ENCODE measurements at regions of chr20 and their contacts with region 1.

Region 1: GRCh38 chr20:35619196-35620095 is 3.8 kb downstream of the SPAG4 start:
- H3K4me3 ChIP-seq: peak overlapping the region; percentile 51
- H3K27ac ChIP-seq: no peak overlapping the region
- H3K4me1 ChIP-seq: no peaks in the 10 kb centered on the region
- CTCF ChIP-seq: peak; percentile 93

Region 2: DNA sequence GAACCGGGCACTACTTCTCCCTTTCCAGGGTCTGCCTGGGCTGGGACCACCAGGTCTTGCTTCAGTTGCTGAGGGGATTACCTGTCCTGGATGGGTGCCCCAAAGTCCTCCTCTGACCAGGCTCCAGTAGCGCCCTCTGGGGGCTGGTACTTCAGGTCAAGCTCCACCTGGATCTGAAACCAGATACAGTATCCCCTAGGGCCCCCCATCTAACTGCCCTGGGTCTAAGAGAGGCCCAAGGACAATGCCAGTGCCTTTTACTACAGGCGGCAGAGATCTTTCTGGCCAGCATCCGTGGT is 15.0 kb before region 1 on chr20:
- CTCF ChIA-PET with region 1: interaction called, 6 read pairs
- POLR2A ChIA-PET with region 1: interaction called, 10 read pairs
- H3K4me3 ChIP-seq: no peak overlapping the region
- H3K27ac ChIP-seq: no peak overlapping the region
- H3K4me1 ChIP-seq: no peaks in the 10 kb centered on the region
- CTCF ChIP-seq: no peak

Region 3: GRCh38 chr20:35629427-35630145 is 10.1 kb after region 1 on chr20:
- CTCF ChIA-PET with region 1: interaction called, 10 read pairs
- POLR2A ChIA-PET with region 1: interaction called, 4 read pairs
- H3K4me3 ChIP-seq: no peak overlapping the region
- H3K27ac ChIP-seq: no peak overlapping the region
- H3K4me1 ChIP-seq: no peaks in the 10 kb centered on the region
- CTCF ChIP-seq: no peak

Region 4: GRCh38 chr20:35636095-35636494 is 16.6 kb after region 1 on chr20:
- CTCF ChIA-PET with region 1: interaction called, 16 read pairs
- POLR2A ChIA-PET with region 1: interaction called, 5 read pairs
- H3K4me3 ChIP-seq: no peak overlapping the region
- H3K27ac ChIP-seq: no peak overlapping the region; the same call in 1 of the 2 replicates
- H3K4me1 ChIP-seq: no peaks in the 10 kb centered on the region
- CTCF ChIP-seq: no peak

Region 5: DNA sequence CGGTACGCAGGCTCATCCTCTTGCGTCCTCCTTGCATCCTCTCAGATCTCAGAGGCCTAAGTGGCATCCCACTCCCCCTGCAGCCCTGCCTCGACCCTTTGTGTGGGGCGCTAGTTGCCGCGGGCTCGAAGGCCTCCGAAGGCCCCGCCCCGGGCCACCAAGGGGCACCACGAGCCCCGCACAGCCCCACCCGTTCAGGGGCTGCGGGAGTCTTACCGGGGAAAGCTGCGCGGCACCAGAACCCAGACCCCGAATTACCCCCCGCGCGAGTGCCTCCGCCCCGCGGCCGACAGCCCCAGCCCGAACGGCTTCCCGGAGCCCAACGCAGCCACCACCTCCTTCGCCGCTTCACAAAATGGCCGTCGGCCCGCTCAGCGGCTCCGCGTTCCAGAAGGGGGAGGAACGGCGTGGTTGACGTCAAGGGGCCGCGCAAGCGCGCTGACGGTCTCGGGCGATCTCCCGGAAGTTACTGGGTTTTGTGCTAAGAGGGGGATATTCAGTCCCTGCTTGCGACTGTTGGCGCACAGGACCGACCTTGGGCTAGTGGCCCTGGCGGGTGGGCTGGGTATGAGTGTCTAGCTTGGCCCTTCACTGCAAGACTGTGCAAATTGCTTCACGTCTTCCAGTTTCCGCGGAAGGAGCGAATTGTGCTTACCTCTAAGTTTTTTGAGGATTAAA is 45.2 kb after region 1 on chr20 and contains the starts of genes CPNE1 and RBM12:
- CTCF ChIA-PET with region 1: interaction called, 10 read pairs
- POLR2A ChIA-PET with region 1: interaction called, 16 read pairs
- H3K4me3 ChIP-seq: peak within 1 kb of the TSS; percentile 87
- H3K27ac ChIP-seq: peak within 1 kb of the TSS; percentile 88
- H3K4me1 ChIP-seq: peaks cover 9% of the 10 kb centered on the region
- CTCF ChIP-seq: peak; percentile 43; the same call in 1 of the 2 replicates